Heart left ventricle (tissue), 16 donors: ENCODE measurements at regions of chr22 and their contacts with region 1.

Region 1: GRCh38 chr22:29553351-29554224 is at the start of gene THOC5:
- DNase-seq: peak; percentile 93 to 96 (median 96)
- ATAC-seq: peak; percentile 98 to 99 (median 99)
- H3K4me3 ChIP-seq: peak within 1 kb of the TSS; percentile 61 to 86 (median 77)
- H3K27ac ChIP-seq: peak within 1 kb of the TSS; percentile 34 to 89 (median 84)
- H3K4me1 ChIP-seq: peaks cover 3 to 16% (median 10%) of the 10 kb centered on the region in 12 donors
- H3K27me3 ChIP-seq: no peaks in the 10 kb centered on the region
- CTCF ChIP-seq: peak; percentile 54 to 93 (median 72)
- POLR2A ChIP-seq: no peak
- total RNA-seq, gene THOC5: 33.8 to 88.7 (median 40.6) TPM

Region 2: GRCh38 chr22:29587938-29588699 is 34.5 kb after region 1 on chr22:
- intact Hi-C with region 1: loop called in 1 of 10 experiments (anchors 1 kb)
- DNase-seq: no peak
- ATAC-seq: no peak
- H3K4me3 ChIP-seq: no peak overlapping the region
- H3K27ac ChIP-seq: no peak overlapping the region
- H3K4me1 ChIP-seq: no peaks in the 10 kb centered on the region
- H3K27me3 ChIP-seq: no peaks in the 10 kb centered on the region
- CTCF ChIP-seq: no peak
- POLR2A ChIP-seq: no peak

Region 3: GRCh38 chr22:29603358-29604075 is 49.9 kb after region 1 on chr22 and contains the start of gene NF2:
- intact Hi-C with region 1: loop called in 2 of 10 experiments (anchors 1 kb)
- DNase-seq: peak; percentile 49 to 99 (median 99)
- ATAC-seq: peak; percentile 99 to 100 (median 100)
- H3K4me3 ChIP-seq: peak within 1 kb of the TSS; percentile 67 to 98 (median 85)
- H3K27ac ChIP-seq: peak within 1 kb of the TSS; percentile 78 to 99 (median 94)
- H3K4me1 ChIP-seq: peaks cover 0 to 23% (median 15%) of the 10 kb centered on the region in 12 donors
- H3K27me3 ChIP-seq: no peaks in the 10 kb centered on the region
- CTCF ChIP-seq: peak in 2 of 12 donors; percentile 19 to 23
- POLR2A ChIP-seq: peak in 1 of 2 donors; percentile 83
- total RNA-seq, gene NF2: 41.2 to 137 (median 52.1) TPM